GM12878 (cell line): ENCODE measurements at regions of chr13 and their contacts with region 1.

Region 1: GRCh38 chr13:108609353-108609752 is 20.1 kb upstream of the MYO16 start:
- DNase-seq: no peak
- ATAC-seq: peak; percentile 75
- H3K4me3 ChIP-seq: no peak overlapping the region
- H3K27ac ChIP-seq: no peak overlapping the region
- H3K4me1 ChIP-seq: no peaks in the 10 kb centered on the region
- H3K27me3 ChIP-seq: no peaks in the 10 kb centered on the region
- CTCF ChIP-seq: peak; percentile 25 to 47 (median 35); a peak in 4 of 6 replicates
- EP300 ChIP-seq: no peak
- POLR2A ChIP-seq: no peak
- RAD21 ChIP-seq: no peak; the same call in 1 of the 2 replicates

Region 2: DNA sequence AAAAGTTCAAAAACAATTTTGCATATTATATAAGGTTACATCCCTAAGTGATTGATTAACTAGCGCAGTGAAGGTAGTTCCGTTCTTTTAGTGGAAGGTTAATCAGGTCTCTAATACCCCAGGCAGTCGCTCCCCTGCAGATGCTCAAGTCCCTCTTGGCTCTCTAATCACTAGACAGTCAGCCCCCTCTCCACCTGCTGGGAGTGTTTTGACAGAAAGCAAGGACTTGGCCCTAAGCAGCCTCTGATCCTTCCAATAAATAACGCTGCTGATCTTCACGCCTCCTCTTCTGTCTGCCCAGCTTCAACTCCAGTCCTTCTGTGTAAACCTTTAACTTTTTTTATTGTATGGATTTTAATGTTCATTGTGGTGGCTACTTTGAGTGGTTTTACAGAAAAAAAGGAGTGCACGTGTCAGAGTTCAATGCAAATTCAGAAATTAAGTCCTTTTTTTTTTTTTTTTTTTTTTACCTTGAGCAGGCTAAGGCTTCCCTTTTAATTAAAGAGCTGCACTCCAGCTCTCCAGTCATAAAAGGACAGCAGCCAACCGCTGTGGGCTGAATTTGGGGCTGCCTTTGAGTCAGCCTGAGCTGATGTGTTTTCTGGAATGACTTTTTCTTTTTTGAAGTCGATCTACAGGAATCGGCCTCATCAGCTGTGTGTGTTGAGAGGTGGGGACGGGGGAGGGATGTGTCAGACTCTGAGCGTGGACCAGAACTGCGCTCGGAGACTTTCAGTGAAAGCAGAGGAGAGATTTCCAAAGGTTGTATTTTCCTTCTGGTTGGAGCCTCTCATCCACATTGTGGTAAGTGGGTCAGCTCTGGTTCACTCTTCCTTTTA is 13.7 kb before region 1 on chr13:
- CTCF ChIA-PET with region 1: interaction called, 8 read pairs
- POLR2A ChIA-PET with region 1: no interaction called
- RAD21 ChIA-PET with region 1: no interaction called
- SMC1A ChIA-PET with region 1: interaction called, 16 read pairs
- in situ Hi-C with region 1: no loop called
- intact Hi-C with region 1: no loop called
- DNase-seq: no peak
- ATAC-seq: peak; percentile 82
- H3K4me3 ChIP-seq: no peak overlapping the region
- H3K27ac ChIP-seq: no peak overlapping the region
- H3K4me1 ChIP-seq: no peaks in the 10 kb centered on the region
- H3K27me3 ChIP-seq: no peaks in the 10 kb centered on the region
- CTCF ChIP-seq: no peak
- EP300 ChIP-seq: no peak
- POLR2A ChIP-seq: no peak
- RAD21 ChIP-seq: no peak